ENCODE measurements at regions of chr7 and their contacts with region 1.

Region 1: DNA sequence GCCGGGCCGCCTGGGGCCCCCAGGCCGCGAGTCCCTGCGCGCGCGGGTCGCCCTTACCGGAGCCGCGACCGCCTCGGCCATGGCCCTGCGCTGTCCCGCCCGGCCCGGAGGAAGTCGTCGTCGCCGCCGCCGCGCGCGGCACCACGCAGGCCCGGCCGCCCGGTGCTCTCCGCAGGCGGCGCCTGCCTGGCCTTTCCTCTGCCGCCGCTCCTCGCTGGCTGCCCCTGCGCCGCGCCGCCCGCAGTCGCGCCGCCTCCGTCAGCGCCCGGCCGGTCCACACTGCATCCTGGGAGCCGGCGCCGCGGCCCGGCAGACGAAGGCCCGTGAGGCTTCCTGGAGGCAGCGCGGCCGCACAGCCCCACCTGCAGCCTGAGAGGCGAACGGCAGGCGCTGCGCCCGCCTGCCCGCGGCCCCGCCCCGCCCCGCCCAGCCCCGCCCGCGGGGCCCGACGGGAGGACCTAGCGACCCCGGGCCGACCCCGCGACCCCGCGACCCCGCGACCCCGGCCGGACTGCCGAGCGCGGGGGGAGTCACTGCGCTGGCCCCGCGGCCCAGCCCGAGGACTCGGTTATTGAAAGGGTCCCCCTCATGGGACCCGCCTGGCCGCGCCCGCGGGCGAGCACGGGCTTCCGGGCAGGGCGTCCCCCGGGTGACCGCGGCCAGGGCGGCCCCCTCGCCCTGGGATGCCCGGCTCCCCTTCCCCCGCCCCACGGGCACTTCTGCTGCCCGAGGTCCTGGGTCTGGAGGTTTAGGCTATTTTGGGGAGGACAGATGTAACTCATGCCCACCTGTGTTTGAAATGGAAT is at the start of gene ZNF746:
- DNase-seq: peak; percentile 76 to 88 (median 79)
- H3K4me3 ChIP-seq: peak within 1 kb of the TSS; percentile 59 to 95 (median 78)
- H3K27ac ChIP-seq: peak within 1 kb of the TSS; percentile 62 to 97 (median 85)
- H3K4me1 ChIP-seq: peaks cover 14 to 22% of the 10 kb centered on the region in 2 donors
- H3K27me3 ChIP-seq: no peaks in the 10 kb centered on the region
- CTCF ChIP-seq: peak in 3 of 6 experiments; percentile 54 to 89 (median 81)
- POLR2A ChIP-seq: peak; percentile 51 to 72
- total RNA-seq, gene ZNF746: 5.9 to 32.2 (median 16.7) TPM

Region 2: GRCh38 chr7:149624419-149625339 is 127.0 kb after region 1 on chr7:
- intact Hi-C with region 1: loop called in 1 of 2 experiments (anchors 10 kb)
- DNase-seq: peak; percentile 92 to 96 (median 94)
- H3K4me3 ChIP-seq: peak overlapping the region; percentile 45 to 99 (median 84)
- H3K27ac ChIP-seq: peak overlapping the region; percentile 43 to 88 (median 86)
- H3K4me1 ChIP-seq: peaks cover 10 to 21% of the 10 kb centered on the region in 2 donors
- H3K27me3 ChIP-seq: no peaks in the 10 kb centered on the region
- CTCF ChIP-seq: peak; percentile 61 to 98 (median 82)
- POLR2A ChIP-seq: peak; percentile 80 to 93

Measured in adrenal gland (tissue), 19 donors.